ENCODE measurements at regions of chr3 and their contacts with region 1.

Region 1: DNA sequence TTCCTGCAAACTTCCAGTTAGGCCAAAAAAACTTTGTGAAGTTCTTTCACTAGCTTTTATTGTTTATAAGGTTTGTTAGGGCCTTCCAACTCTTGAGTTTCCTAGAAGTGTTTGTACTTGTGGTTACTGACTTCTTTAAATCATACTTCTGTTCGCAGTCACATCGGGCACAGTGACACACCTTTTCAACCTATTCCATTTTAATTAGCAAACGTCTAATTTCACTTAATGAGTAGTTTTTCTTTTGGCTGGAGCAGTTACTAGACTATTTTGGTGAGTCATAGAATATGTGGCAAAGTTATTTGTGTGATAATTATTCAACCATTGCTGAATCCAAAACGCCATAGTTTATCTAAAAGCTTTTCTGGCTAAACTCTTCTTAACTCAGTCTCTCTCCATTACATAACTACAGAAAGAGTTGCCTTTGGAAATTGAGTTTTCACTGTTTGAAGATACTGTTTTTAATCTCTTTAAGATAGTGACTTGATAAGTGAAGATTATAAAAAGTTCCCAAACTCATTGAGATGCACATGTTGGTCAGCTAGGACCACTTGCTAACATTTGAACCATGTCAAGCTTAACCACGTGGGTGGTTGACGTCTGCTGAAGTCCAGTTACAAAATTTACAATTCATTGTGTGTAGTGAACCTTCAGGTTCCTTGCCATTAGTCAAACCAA is 21.5 kb downstream of the CNOT10 start:
- DNase-seq: no peak
- CTCF ChIP-seq: no peak

Region 2: DNA sequence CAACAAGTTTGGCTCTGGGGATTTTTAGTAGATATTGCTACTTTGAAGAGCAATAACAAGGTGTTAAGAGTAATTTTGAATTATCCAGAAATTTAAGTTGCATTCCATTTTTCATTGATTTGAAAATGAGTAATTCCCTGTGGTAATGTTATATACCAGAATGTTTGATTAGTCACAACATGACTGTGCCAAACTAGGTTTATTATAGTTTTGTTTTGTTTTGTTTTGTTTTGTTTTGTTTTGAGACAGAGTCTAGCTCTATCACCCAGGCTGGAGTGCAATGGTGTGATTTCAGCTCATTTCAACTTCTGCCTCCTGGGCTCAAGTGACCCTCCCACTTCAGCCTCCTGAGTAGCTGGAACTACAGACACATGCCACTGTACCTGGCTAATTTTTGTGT is 19.2 kb after region 1 on chr3:
- CTCF ChIA-PET with region 1: interaction called, 13 read pairs
- POLR2A ChIA-PET with region 1: no interaction called
- DNase-seq: no peak
- CTCF ChIP-seq: no peak

Measured in GM10248 (cell line).